Posterior cingulate gyrus (tissue), 11 donors: ENCODE measurements at regions of chr3 and their contacts with region 1.

Region 1: GRCh38 chr3:107543666-107544065 is 20.9 kb downstream of the BBX start:
- DNase-seq: peak in 1 of 10 donors; percentile 33

Region 2: DNA sequence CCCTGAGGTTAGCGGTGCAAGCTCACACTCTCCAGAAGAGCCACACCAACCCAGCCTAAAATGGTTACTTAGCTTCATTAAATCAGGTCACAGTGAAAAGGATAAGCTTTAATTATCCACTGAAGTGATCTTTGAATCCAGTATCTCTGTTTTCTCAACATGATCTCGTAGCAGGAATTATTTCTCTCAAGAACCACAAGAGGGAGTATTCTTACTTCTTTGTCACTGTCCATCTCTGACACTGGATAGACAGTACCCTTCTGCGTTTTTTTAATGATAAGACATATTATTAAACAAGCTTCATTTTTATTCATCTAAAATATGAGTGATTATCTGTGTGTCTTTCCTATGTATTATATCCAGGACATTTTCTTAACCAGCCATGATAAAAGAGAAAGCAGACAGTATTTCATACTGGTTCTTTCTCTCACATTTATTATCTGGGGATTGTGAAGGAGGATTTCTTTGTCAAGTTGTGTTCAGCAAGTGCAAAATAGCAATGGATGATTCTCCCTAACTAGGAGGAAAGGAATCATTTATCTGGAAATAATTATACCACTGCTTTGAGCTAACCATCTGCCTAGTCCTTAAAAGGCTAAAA is 271.8 kb before region 1 on chr3:
- intact Hi-C with region 1: loop called (anchors 10 kb)
- DNase-seq: no peak

Region 3: GRCh38 chr3:108100906-108101660 is 557.4 kb after region 1 on chr3:
- intact Hi-C with region 1: no loop called
- DNase-seq: no peak